Adrenal gland (tissue), 19 donors: ENCODE measurements at regions of chr15 and their contacts with region 1.

Region 1: GRCh38 chr15:56491110-56491722 is 26.3 kb upstream of the MNS1 start:
- DNase-seq: peak; percentile 57 to 85 (median 74)
- H3K4me3 ChIP-seq: no peak overlapping the region
- H3K27ac ChIP-seq: no peak overlapping the region
- H3K4me1 ChIP-seq: no peaks in the 10 kb centered on the region
- H3K27me3 ChIP-seq: no peaks in the 10 kb centered on the region
- CTCF ChIP-seq: peak; percentile 65 to 83 (median 70)
- POLR2A ChIP-seq: no peak

Region 2: DNA sequence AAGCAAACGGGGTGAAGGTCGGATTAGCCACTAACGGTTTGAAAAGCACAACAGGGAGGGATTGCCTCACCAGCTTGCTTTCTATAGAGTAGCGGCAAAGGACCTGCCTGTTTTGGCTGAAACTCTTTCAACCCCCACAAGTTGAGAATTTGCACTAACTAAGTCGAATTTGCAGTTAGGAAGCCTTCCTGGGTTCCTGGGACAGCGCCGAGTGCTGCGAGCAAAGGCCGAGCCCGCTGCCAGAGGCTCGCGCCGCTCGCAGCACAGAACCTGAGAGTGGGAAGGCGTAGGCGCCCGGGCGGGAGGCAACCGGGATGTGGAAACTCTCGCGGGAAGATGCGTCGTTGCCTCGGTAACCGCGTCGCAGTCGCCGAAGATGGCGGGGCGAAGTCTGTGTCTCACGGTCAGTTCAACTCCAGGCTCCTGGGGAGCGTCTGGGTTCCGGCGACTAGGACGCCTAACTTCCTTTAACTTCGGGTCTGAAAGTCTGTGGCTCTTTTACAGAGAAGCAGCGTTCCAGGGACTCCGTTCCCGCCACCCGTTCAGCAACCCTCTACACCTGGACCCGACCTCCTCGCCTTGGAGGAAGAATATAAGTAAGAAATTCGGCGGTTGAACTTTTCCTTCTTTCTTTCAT is 126.0 kb before region 1 on chr15 and contains the start of gene TEX9:
- intact Hi-C with region 1: no loop called
- DNase-seq: peak; percentile 89 to 94 (median 91)
- H3K4me3 ChIP-seq: peak within 1 kb of the TSS in 3 of 4 donors; percentile 13 to 77 (median 56)
- H3K27ac ChIP-seq: peak within 1 kb of the TSS; percentile 18 to 87 (median 75)
- H3K4me1 ChIP-seq: peaks cover 5 to 6% of the 10 kb centered on the region in 2 donors
- H3K27me3 ChIP-seq: no peaks in the 10 kb centered on the region
- CTCF ChIP-seq: no peak
- POLR2A ChIP-seq: peak; percentile 55 to 84
- total RNA-seq, gene TEX9: 5.8 to 18.3 (median 8.9) TPM

Region 3: GRCh38 chr15:56608140-56608778 is 117.0 kb after region 1 on chr15:
- intact Hi-C with region 1: no loop called
- DNase-seq: no peak
- H3K4me3 ChIP-seq: no peak overlapping the region
- H3K27ac ChIP-seq: no peak overlapping the region
- H3K4me1 ChIP-seq: no peaks in the 10 kb centered on the region
- H3K27me3 ChIP-seq: no peaks in the 10 kb centered on the region
- CTCF ChIP-seq: no peak
- POLR2A ChIP-seq: no peak

Region 4: DNA sequence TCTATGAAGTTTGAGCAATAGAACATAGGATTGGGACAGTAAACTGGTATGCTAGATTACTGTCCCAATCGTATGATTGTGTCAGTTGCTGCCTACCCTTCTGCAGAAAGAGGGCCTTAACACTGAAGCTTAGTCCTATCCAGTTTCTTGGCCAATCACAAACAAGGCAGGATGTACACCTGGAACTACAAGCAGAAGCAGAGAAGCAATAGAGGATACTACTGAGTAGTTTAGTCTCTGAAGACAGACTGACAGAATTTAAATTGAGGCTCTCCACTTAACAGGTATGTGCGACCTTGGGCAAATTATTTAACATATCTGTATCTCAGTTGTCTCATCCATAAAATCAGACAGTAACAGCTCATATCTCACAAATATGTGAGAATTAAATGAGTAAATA is 157.1 kb after region 1 on chr15:
- intact Hi-C with region 1: no loop called
- DNase-seq: no peak
- H3K4me3 ChIP-seq: no peak overlapping the region
- H3K27ac ChIP-seq: no peak overlapping the region
- H3K4me1 ChIP-seq: no peaks in the 10 kb centered on the region
- H3K27me3 ChIP-seq: no peaks in the 10 kb centered on the region
- CTCF ChIP-seq: no peak
- POLR2A ChIP-seq: no peak

Region 5: DNA sequence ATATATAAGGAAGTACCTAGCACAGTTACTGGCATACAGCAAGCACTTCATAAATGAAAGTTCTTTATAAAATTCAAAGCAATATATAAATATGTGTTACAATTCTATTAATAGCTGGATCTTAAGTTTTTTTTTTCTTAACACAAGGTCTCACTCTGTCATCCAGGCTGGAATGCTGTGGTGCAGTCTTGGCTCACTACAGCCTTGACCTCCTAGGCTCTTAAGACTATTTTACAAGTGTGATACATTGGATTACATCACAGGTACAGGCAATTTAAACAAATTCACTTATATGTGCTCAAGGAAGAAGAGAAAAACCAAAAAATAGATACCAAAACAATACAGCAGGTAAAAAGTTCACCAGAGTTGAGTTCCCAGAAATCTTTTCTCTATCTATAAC is 181.5 kb after region 1 on chr15:
- intact Hi-C with region 1: no loop called
- DNase-seq: peak in 2 of 7 donors; percentile 15 to 19
- H3K4me3 ChIP-seq: no peak overlapping the region
- H3K27ac ChIP-seq: no peak overlapping the region
- H3K4me1 ChIP-seq: peaks cover 0 to 10% of the 10 kb centered on the region in 2 donors
- H3K27me3 ChIP-seq: no peaks in the 10 kb centered on the region
- CTCF ChIP-seq: no peak
- POLR2A ChIP-seq: no peak

Region 6: GRCh38 chr15:56886932-56887781 is 395.9 kb after region 1 on chr15:
- intact Hi-C with region 1: loop called in 1 of 2 experiments (anchors 10 kb)
- DNase-seq: peak; percentile 94 to 97 (median 96)
- H3K4me3 ChIP-seq: peak overlapping the region; percentile 27 to 64 (median 39)
- H3K27ac ChIP-seq: peak overlapping the region; percentile 92 to 98 (median 97)
- H3K4me1 ChIP-seq: peaks cover 6 to 18% of the 10 kb centered on the region in 2 donors
- H3K27me3 ChIP-seq: no peaks in the 10 kb centered on the region
- CTCF ChIP-seq: peak in 1 of 6 experiments; percentile 20
- POLR2A ChIP-seq: peak; percentile 76 to 90

Region 7: GRCh38 chr15:57158589-57158988 is 667.4 kb after region 1 on chr15:
- intact Hi-C with region 1: loop called in 1 of 2 experiments (anchors 10 kb)
- DNase-seq: peak in 3 of 7 donors; percentile 25 to 49 (median 41)
- H3K4me3 ChIP-seq: no peak overlapping the region
- H3K27ac ChIP-seq: no peak overlapping the region
- H3K4me1 ChIP-seq: peaks cover 0 to 11% of the 10 kb centered on the region in 2 donors
- H3K27me3 ChIP-seq: no peaks in the 10 kb centered on the region
- CTCF ChIP-seq: no peak
- POLR2A ChIP-seq: no peak